A549 (cell line): ENCODE measurements at regions of chr6 and their contacts with region 1.

Region 1: DNA sequence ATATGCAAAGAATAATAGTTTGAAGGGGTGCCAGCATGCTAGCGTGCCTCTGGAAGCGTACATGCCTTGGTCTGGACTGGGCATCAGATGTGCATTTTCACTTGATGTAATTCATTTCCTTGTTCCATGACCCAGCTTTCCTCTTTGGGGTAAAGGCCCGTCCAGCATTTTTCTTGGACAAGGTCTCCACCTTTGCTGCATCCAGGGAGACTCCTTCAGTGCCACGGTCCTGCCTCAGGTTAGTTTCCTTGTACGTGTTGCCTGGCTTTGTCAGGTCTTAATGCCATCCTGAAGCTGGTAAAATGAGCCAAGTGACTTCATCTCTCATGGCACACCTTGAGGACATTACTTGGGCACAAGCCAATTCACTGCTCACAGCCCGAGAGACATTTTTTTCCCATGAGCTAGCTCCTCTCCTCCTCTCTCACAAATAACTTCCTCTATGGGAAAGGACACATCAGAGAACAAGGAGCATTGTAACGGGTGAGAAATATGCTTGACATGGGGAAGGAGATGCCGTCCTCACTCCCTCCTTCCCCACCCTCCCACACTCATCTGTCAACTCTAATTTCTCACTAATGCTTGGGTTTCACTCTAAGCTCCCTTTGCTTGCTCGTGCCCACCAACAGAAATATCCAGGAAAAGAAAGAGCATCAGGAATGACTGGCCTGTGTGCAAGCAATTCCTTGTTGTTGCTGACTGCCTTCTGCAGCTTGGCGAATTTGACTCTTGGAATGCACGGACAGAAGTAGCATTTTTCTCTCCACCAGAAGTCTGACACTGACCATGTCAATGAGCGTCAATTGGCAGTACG is 24.0 kb downstream of the EDN1 start:
- DNase-seq: peak in 1 of 2 experiments; percentile 95
- ATAC-seq: peak; percentile 75 to 83
- H3K4me3 ChIP-seq: 0 out of 3 replicates have a peak overlapping the region, but pooled peaks have one; percentile 12
- H3K27ac ChIP-seq: peak overlapping the region; percentile 89 to 98
- H3K4me1 ChIP-seq: peaks cover 46% of the 10 kb centered on the region
- CTCF ChIP-seq: no peak
- EP300 ChIP-seq: peak in 1 of 2 experiments; percentile 55; a peak in 1 of 5 replicates
- POLR2A ChIP-seq: no peak
- RAD21 ChIP-seq: peak; percentile 14 to 16; a peak in 1 of 5 replicates

Region 2: GRCh38 chr6:12196326-12196936 is 117.8 kb before region 1 on chr6:
- CTCF ChIA-PET with region 1: no interaction called
- POLR2A ChIA-PET with region 1: no interaction called
- DNase-seq: no peak
- ATAC-seq: no peak
- H3K4me3 ChIP-seq: no peak overlapping the region
- H3K27ac ChIP-seq: no peak overlapping the region
- H3K4me1 ChIP-seq: no peaks in the 10 kb centered on the region
- CTCF ChIP-seq: no peak
- EP300 ChIP-seq: no peak
- POLR2A ChIP-seq: no peak
- RAD21 ChIP-seq: no peak

Region 3: DNA sequence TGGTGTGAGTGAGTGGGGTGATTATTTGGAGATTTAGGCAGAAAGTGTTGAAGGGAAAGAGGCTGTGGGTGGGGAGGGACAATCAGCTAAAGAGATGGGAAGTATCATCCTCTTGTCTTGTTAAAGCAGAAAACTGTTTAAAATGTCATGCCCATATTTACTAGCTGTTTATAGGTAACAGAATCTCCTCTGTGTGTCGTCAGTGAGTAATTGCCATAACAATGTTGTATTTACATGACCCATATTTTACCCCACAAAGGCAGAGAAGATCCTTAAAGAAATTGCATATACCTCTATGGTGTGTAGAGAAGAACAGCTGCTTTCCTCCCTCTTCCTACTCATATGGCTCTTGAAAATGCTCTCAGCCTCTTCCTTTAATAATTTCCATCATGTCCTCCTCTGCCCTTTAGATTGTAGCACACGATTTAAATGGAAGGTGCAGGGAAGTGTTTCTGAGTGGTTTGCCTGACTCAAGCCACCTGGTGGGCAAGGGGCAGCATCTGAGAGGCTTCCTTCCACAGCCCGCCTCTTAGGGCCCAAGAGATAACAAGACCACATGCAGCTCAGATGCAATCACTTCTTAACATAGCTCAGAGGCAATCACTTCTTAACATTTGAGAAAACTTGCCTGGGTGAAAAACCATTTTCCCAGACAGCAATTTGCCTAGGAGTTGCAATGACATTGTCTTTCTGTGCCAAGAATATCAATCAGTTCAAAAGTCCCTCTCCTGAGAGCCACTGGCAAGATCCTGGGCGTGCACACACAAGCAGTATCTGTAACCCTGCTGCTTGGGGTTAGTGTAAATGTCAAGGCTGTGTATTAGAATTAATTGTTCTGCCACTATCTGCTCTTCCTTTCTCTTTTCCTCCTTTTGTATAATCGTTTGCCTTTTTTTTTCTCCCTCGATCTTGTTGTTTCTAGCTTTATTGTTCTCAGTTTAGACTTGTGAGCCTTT is 68.2 kb before region 1 on chr6:
- CTCF ChIA-PET with region 1: no interaction called
- POLR2A ChIA-PET with region 1: no interaction called
- DNase-seq: peak in 1 of 2 experiments; percentile 27
- ATAC-seq: peak; percentile 47 to 63; a peak in 4 of 6 replicates
- H3K4me3 ChIP-seq: no peak overlapping the region
- H3K27ac ChIP-seq: peak overlapping the region in 1 of 2 experiments; percentile 10; a peak in 1 of 6 replicates
- H3K4me1 ChIP-seq: peaks cover 27% of the 10 kb centered on the region
- CTCF ChIP-seq: no peak
- EP300 ChIP-seq: no peak
- POLR2A ChIP-seq: no peak
- RAD21 ChIP-seq: no peak

Region 4: DNA sequence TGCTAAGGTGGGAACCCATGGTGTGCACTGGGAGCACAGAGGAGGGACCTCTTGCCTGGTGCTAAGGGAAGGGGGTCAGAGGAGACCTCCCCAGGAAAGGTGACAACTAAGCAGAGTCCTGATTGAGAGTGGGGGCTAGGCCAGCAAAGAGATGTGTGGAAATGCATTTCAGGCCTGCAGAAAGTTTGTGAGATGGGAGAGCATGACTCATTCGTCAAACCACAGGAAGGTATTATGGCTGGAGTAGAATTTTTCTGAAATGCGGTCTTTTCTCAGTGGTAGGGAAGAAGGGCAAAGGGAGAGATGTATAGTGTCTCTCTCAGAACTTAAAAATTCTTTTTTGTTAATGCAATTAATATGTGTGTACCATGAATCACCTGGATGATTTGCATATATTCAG is 47.6 kb before region 1 on chr6:
- CTCF ChIA-PET with region 1: no interaction called
- POLR2A ChIA-PET with region 1: no interaction called
- DNase-seq: no peak
- ATAC-seq: no peak
- H3K4me3 ChIP-seq: no peak overlapping the region
- H3K27ac ChIP-seq: no peak overlapping the region
- H3K4me1 ChIP-seq: no peaks in the 10 kb centered on the region
- CTCF ChIP-seq: no peak
- EP300 ChIP-seq: no peak
- POLR2A ChIP-seq: no peak
- RAD21 ChIP-seq: no peak

Region 5: GRCh38 chr6:12324514-12325147 is 10.4 kb after region 1 on chr6:
- CTCF ChIA-PET with region 1: interaction called, 6 read pairs
- POLR2A ChIA-PET with region 1: interaction called, 13 read pairs
- DNase-seq: peak in 1 of 2 experiments; percentile 73
- ATAC-seq: peak; percentile 23 to 49; a peak in 4 of 6 replicates
- H3K4me3 ChIP-seq: no peak overlapping the region
- H3K27ac ChIP-seq: peak overlapping the region; percentile 95 to 98
- H3K4me1 ChIP-seq: peaks cover 57% of the 10 kb centered on the region
- CTCF ChIP-seq: no peak
- EP300 ChIP-seq: no peak
- POLR2A ChIP-seq: no peak
- RAD21 ChIP-seq: no peak

Region 6: GRCh38 chr6:12348530-12349511 is 34.6 kb after region 1 on chr6:
- CTCF ChIA-PET with region 1: interaction called, 11 read pairs
- POLR2A ChIA-PET with region 1: no interaction called
- DNase-seq: peak; percentile 78 to 98
- ATAC-seq: peak; percentile 94 to 97
- H3K4me3 ChIP-seq: no peak overlapping the region
- H3K27ac ChIP-seq: peak overlapping the region; percentile 85 to 88
- H3K4me1 ChIP-seq: peaks cover 59% of the 10 kb centered on the region
- CTCF ChIP-seq: no peak
- EP300 ChIP-seq: peak; percentile 98 to 99
- POLR2A ChIP-seq: no peak
- RAD21 ChIP-seq: peak; percentile 53 to 82

Region 7: DNA sequence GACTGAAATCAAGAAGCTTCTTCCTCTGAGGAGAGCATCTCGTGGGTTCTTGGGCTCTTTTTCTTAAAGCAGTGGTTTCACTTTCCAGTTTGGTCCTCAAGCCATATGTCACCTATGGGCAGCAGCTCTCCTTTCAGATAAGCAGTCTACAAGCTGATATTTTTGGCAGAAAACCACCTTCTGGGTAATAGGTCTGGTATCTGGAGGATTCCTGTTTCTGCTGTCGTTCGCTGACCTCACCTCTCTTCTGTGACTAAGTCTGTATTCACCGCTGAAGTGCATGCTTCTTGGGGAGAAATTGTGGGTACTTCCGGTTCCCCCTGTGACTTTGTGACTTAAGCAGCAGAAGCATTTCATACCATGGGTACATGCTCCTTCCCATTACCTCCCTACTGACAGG is 169.5 kb after region 1 on chr6:
- CTCF ChIA-PET with region 1: interaction called, 14 read pairs
- POLR2A ChIA-PET with region 1: interaction called, 9 read pairs
- DNase-seq: peak; percentile 30 to 95
- ATAC-seq: peak; percentile 86 to 93
- H3K4me3 ChIP-seq: peak overlapping the region; percentile 22; the same call in 1 of the 3 replicates
- H3K27ac ChIP-seq: peak overlapping the region; percentile 92 to 98
- H3K4me1 ChIP-seq: peaks cover 54% of the 10 kb centered on the region
- CTCF ChIP-seq: no peak
- EP300 ChIP-seq: peak; percentile 75 to 79; a peak in 4 of 5 replicates
- POLR2A ChIP-seq: no peak
- RAD21 ChIP-seq: peak; percentile 39 to 45

Region 8: DNA sequence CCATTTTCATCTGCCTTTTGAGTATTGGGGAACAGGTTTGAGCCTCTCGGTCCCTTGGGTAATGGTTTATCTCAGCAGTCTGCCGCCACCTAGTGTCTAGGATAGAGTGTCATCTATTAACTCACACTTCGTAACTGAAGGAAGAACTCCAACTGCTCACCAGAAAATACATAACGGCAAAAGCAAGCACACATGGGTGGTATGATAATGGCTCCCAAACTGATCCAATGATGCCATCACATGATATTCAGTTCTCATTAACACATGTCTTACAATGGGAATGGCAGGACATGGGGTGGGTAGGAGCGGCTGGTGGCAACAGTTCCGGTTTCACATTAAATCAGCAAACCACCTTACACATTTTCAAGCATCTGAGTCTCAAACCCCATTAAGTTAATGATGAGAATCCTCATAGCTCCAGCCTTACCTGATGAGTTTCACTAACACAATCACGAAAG is 291.7 kb after region 1 on chr6:
- CTCF ChIA-PET with region 1: interaction called, 17 read pairs
- POLR2A ChIA-PET with region 1: interaction called, 5 read pairs
- DNase-seq: peak; percentile 23 to 83
- ATAC-seq: peak; percentile 69 to 83; a peak in 5 of 6 replicates
- H3K4me3 ChIP-seq: no peak overlapping the region
- H3K27ac ChIP-seq: peak overlapping the region; percentile 69 to 87; a peak in 4 of 6 replicates
- H3K4me1 ChIP-seq: peaks cover 55% of the 10 kb centered on the region
- CTCF ChIP-seq: peak; percentile 79
- EP300 ChIP-seq: no peak
- POLR2A ChIP-seq: no peak
- RAD21 ChIP-seq: peak; percentile 78 to 85